ENCODE measurements at regions of chr1 and their contacts with region 1.

Region 1: GRCh38 chr1:186482661-186483255 is 21.8 kb upstream of the PDC start:
- DNase-seq: peak; percentile 70
- ATAC-seq: peak; percentile 28; the same call in 1 of the 2 replicates
- H3K4me3 ChIP-seq: no peak overlapping the region
- H3K27ac ChIP-seq: peak overlapping the region; percentile 72
- H3K4me1 ChIP-seq: peaks cover 22% of the 10 kb centered on the region
- H3K27me3 ChIP-seq: no peaks in the 10 kb centered on the region
- CTCF ChIP-seq: peak; percentile 91

Region 2: GRCh38 chr1:186404454-186405051 is 78.2 kb before region 1 on chr1:
- CTCF ChIA-PET with region 1: interaction called, 4 read pairs
- POLR2A ChIA-PET with region 1: no interaction called
- intact Hi-C with region 1: loop called (anchors 5 kb)
- DNase-seq: peak; percentile 52
- ATAC-seq: no peak
- H3K4me3 ChIP-seq: no peak overlapping the region
- H3K27ac ChIP-seq: no peak overlapping the region
- H3K4me1 ChIP-seq: no peaks in the 10 kb centered on the region
- H3K27me3 ChIP-seq: no peaks in the 10 kb centered on the region
- CTCF ChIP-seq: peak; percentile 73

Region 3: GRCh38 chr1:186535388-186536133 is 52.8 kb after region 1 on chr1:
- CTCF ChIA-PET with region 1: no interaction called
- POLR2A ChIA-PET with region 1: no interaction called
- intact Hi-C with region 1: loop called (anchors 2 kb)
- DNase-seq: peak; percentile 92
- ATAC-seq: peak; percentile 91
- H3K4me3 ChIP-seq: no peak overlapping the region
- H3K27ac ChIP-seq: peak overlapping the region; percentile 83
- H3K4me1 ChIP-seq: peaks cover 28% of the 10 kb centered on the region
- H3K27me3 ChIP-seq: no peaks in the 10 kb centered on the region
- CTCF ChIP-seq: no peak

Region 4: GRCh38 chr1:186605762-186606350 is 123.1 kb after region 1 on chr1:
- CTCF ChIA-PET with region 1: no interaction called
- POLR2A ChIA-PET with region 1: no interaction called
- intact Hi-C with region 1: loop called (anchors 1 kb)
- DNase-seq: peak; percentile 57
- ATAC-seq: peak; percentile 56; the same call in 1 of the 2 replicates
- H3K4me3 ChIP-seq: no peak overlapping the region
- H3K27ac ChIP-seq: peak overlapping the region; percentile 11; the same call in 1 of the 2 replicates
- H3K4me1 ChIP-seq: no peaks in the 10 kb centered on the region
- H3K27me3 ChIP-seq: no peaks in the 10 kb centered on the region
- CTCF ChIP-seq: peak; percentile 79

Region 5: DNA sequence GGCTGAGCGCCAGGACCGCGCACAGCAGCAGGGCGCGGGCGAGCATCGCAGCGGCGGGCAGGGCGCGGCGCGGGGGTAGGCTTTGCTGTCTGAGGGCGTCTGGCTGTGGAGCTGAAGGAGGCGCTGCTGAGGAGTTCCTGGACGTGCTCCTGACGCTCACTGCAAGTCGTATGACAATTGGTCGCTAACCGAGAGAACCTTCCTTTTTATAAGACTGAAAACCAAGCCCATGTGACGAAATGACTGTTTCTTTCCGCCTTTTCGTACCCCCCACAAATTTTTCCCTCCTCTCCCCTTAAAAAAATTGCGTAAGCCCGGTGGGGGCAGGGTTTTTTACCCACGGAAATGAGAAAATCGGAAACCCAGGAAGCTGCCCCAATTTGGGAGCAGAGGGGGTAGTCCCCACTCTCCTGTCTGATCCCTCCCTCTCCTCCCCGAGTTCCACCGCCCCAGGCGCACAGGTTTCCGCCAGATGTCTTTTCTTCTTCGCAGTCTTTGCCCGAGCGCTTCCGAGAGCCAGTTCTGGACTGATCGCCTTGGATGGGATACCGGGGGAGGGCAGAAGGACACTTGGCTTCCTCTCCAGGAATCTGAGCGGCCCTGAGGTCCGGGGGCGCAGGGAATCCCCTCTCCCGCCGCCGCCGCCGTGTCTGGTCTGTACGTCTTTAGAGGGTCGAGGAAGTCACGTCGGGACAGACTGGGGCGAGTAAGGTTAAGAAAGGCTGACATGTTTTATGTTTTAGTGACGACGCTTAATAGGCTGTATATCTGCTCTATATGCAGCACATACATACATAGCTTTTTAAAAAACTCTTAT is 197.7 kb after region 1 on chr1 and contains the start of gene PTGS2:
- CTCF ChIA-PET with region 1: no interaction called
- POLR2A ChIA-PET with region 1: no interaction called
- intact Hi-C with region 1: loop called (anchors 1 kb)
- DNase-seq: peak; percentile 55
- ATAC-seq: peak; percentile 92
- H3K4me3 ChIP-seq: peak within 1 kb of the TSS; percentile 65
- H3K27ac ChIP-seq: peak within 1 kb of the TSS; percentile 14; the same call in 1 of the 2 replicates
- H3K4me1 ChIP-seq: no peaks in the 10 kb centered on the region
- H3K27me3 ChIP-seq: no peaks in the 10 kb centered on the region
- CTCF ChIP-seq: peak; percentile 47; the same call in 1 of the 2 replicates
- total RNA-seq, gene PTGS2: 4.9 and 7.9 TPM in 2 replicates

Region 6: GRCh38 chr1:186985889-186986491 is 503.2 kb after region 1 on chr1:
- CTCF ChIA-PET with region 1: no interaction called
- POLR2A ChIA-PET with region 1: no interaction called
- intact Hi-C with region 1: loop called (anchors 1 kb)
- DNase-seq: peak; percentile 73
- ATAC-seq: peak; percentile 59
- H3K4me3 ChIP-seq: no peak overlapping the region
- H3K27ac ChIP-seq: no peak overlapping the region
- H3K4me1 ChIP-seq: no peaks in the 10 kb centered on the region
- H3K27me3 ChIP-seq: no peaks in the 10 kb centered on the region
- CTCF ChIP-seq: peak; percentile 77

Region 7: DNA sequence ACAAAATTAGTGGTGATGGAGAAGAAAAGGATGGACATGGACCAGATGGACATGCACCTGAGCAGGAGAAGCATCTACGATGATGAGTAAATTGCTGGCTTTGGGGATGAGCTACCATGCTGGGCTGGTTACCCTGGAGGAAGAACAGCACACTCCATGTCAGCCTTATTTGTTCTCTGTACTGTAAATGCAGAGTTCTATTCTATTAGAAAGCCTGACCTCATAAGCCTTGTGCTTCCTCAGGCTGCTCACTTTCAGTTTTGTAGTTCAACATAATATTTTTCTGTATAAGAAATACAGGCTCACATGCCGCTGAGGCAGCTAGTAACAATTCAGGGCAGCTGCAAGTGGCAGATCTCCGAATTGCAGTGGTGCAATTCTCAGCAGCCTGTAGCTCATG is 595.6 kb after region 1 on chr1:
- CTCF ChIA-PET with region 1: no interaction called
- POLR2A ChIA-PET with region 1: no interaction called
- intact Hi-C with region 1: no loop called
- DNase-seq: no peak
- ATAC-seq: no peak
- H3K4me3 ChIP-seq: no peak overlapping the region
- H3K27ac ChIP-seq: no peak overlapping the region
- H3K4me1 ChIP-seq: no peaks in the 10 kb centered on the region
- H3K27me3 ChIP-seq: no peaks in the 10 kb centered on the region
- CTCF ChIP-seq: no peak

Measured in PC-3 (cell line).